CD8-positive, alpha-beta T cell (primary cell): ENCODE measurements at regions of chr12 and their contacts with region 1.

Region 1: DNA sequence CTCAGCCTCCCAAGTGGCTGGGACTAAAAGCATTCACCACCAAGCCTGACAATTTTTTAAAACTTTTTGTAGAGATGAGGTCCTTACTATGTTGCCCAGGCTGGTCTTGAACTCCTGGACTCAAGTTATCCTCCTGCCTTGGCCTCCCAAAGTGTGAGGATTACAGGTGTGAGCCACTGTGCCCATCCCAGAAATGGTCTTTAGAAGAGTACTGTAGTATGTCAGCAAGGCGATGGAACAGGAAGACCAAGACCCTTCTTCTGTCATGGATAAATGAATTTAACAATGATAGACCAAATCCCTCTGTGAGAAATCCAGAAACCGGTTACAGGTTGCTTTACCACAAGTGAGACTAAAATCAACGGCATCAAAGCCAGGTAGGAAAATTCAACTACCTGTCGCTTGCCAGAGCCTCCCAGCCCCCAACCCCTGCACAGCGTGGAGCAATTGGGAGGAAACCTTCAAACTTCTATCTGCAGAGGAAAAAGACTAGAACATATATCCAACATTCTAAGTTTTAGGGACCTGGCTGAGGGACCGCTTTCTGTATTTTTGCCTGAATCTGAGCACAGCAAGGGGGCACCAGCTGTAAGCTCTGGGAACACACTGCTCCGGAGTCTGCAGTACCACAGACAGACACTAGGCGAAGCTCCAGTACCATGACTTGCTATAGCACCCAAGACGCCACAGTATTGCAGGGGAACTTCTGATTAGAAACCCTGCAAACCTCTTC is 51.3 kb downstream of the CPSF6 start:
- DNase-seq: peak; percentile 64 to 89 (median 83)
- ATAC-seq: peak; percentile 100
- H3K4me3 ChIP-seq: no peak overlapping the region
- H3K4me3 Mint-ChIP-seq: no peak overlapping the region
- H3K27ac ChIP-seq: no peak overlapping the region
- H3K27ac Mint-ChIP-seq: no peak overlapping the region
- H3K4me1 ChIP-seq: no peaks in the 10 kb centered on the region
- H3K4me1 Mint-ChIP-seq: peaks cover 10% of the 10 kb centered on the region
- H3K27me3 ChIP-seq: peaks cover 0 to 9% of the 10 kb centered on the region in 2 experiments
- H3K27me3 Mint-ChIP-seq: peaks cover 24% of the 10 kb centered on the region
- CTCF ChIP-seq: peak; percentile 92

Region 2: GRCh38 chr12:69324797-69325466 is 34.2 kb after region 1 on chr12:
- CTCF ChIA-PET with region 1: interaction called, 5 read pairs
- POLR2A ChIA-PET with region 1: interaction called, 15 read pairs
- intact Hi-C with region 1: loop called in 1 of 2 experiments (anchors 5 kb)
- DNase-seq: peak in 1 of 9 experiments; percentile 13
- ATAC-seq: no peak
- H3K4me3 ChIP-seq: no peak overlapping the region
- H3K4me3 Mint-ChIP-seq: no peak overlapping the region
- H3K27ac ChIP-seq: no peak overlapping the region
- H3K27ac Mint-ChIP-seq: no peak overlapping the region
- H3K4me1 ChIP-seq: peaks cover 13% of the 10 kb centered on the region
- H3K4me1 Mint-ChIP-seq: peaks cover 24% of the 10 kb centered on the region
- H3K27me3 ChIP-seq: no peaks in the 10 kb centered on the region
- H3K27me3 Mint-ChIP-seq: peaks cover 3% of the 10 kb centered on the region
- CTCF ChIP-seq: no peak

Region 3: DNA sequence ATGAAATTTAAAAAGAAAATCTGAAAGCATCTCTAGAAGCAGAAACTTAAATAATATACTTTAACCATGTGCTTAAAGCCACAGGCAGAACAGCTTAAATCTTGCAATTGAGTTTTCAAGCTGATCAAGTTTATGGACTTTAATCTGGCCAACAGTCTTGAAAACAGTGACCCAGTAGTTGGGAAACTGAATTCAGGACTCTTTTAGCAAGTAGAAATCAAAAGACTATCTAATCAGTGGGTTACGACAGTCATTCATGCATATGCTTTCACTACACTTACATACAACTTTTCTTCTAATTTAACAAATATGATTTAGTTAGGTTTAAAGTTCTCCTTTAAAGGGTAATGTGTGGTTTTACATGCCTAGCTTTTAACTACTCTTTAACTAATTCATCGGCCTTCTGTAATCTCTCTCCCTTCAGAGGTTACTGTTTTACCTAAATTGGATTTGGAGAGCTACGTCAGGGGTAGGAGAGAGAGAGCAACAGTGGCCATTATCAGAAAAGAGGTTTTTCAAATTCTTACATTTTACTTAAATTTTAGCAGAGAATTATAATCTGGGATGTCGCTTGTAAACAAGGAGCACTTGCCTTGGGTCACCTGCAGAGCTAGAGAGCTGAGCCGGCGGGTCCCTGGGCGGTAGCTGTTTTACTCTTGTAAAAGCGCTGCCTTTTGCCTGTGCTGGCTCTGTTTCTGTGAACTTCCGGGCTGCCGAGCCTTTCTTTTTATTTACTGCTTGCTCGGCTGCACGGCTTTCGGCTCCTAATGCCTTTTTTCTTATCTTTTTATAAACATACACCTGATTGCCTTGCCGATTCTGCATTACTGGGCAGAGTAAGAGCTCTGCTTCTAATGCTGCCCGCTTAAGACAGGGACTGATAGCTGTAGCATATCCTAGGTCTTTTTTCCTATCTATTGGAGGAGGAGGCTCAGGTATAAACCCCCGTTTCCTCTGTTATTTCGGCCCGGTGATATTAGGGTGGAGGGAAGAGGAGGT is 40.1 kb after region 1 on chr12:
- CTCF ChIA-PET with region 1: interaction called, 8 read pairs
- POLR2A ChIA-PET with region 1: interaction called, 15 read pairs
- intact Hi-C with region 1: loop called (anchors 1 to 5 kb)
- DNase-seq: peak; percentile 48 to 85 (median 65)
- ATAC-seq: peak; percentile 67
- H3K4me3 ChIP-seq: peak overlapping the region; percentile 53 to 61
- H3K4me3 Mint-ChIP-seq: peak overlapping the region; percentile 93
- H3K27ac ChIP-seq: peak overlapping the region; percentile 80 to 86
- H3K27ac Mint-ChIP-seq: peak overlapping the region; percentile 99
- H3K4me1 ChIP-seq: peaks cover 51% of the 10 kb centered on the region
- H3K4me1 Mint-ChIP-seq: peaks cover 56% of the 10 kb centered on the region
- H3K27me3 ChIP-seq: no peaks in the 10 kb centered on the region
- H3K27me3 Mint-ChIP-seq: no peaks in the 10 kb centered on the region
- CTCF ChIP-seq: no peak

Region 4: GRCh38 chr12:69354556-69355187 is 64.0 kb after region 1 on chr12:
- CTCF ChIA-PET with region 1: interaction called, 23 read pairs
- POLR2A ChIA-PET with region 1: interaction called, 3 read pairs
- intact Hi-C with region 1: loop called (anchors 1 to 2 kb)
- DNase-seq: no peak
- ATAC-seq: no peak
- H3K4me3 ChIP-seq: no peak overlapping the region
- H3K4me3 Mint-ChIP-seq: no peak overlapping the region
- H3K27ac ChIP-seq: no peak overlapping the region
- H3K27ac Mint-ChIP-seq: no peak overlapping the region
- H3K4me1 ChIP-seq: peaks cover 9% of the 10 kb centered on the region
- H3K4me1 Mint-ChIP-seq: peaks cover 13% of the 10 kb centered on the region
- H3K27me3 ChIP-seq: no peaks in the 10 kb centered on the region
- H3K27me3 Mint-ChIP-seq: peaks cover 14% of the 10 kb centered on the region
- CTCF ChIP-seq: no peak

Region 5: GRCh38 chr12:69470189-69471075 is 179.7 kb after region 1 on chr12 and contains the start of gene FRS2:
- CTCF ChIA-PET with region 1: no interaction called
- POLR2A ChIA-PET with region 1: no interaction called
- intact Hi-C with region 1: loop called in 1 of 2 experiments (anchors 5 kb)
- DNase-seq: peak; percentile 66 to 91 (median 84)
- ATAC-seq: peak; percentile 97
- H3K4me3 ChIP-seq: peak within 1 kb of the TSS; percentile 86 to 88
- H3K4me3 Mint-ChIP-seq: peak within 1 kb of the TSS; percentile 98
- H3K27ac ChIP-seq: peak within 1 kb of the TSS; percentile 76 to 82
- H3K27ac Mint-ChIP-seq: peak within 1 kb of the TSS; percentile 97
- H3K4me1 ChIP-seq: peaks cover 30% of the 10 kb centered on the region
- H3K4me1 Mint-ChIP-seq: peaks cover 46% of the 10 kb centered on the region
- H3K27me3 ChIP-seq: no peaks in the 10 kb centered on the region
- H3K27me3 Mint-ChIP-seq: no peaks in the 10 kb centered on the region
- CTCF ChIP-seq: no peak
- total RNA-seq, gene FRS2: 31.1 to 32.4 TPM

Region 6: GRCh38 chr12:69570545-69571399 is 280.1 kb after region 1 on chr12:
- CTCF ChIA-PET with region 1: interaction called, 51 read pairs
- POLR2A ChIA-PET with region 1: interaction called, 10 read pairs
- intact Hi-C with region 1: loop called (anchors 1 kb)
- DNase-seq: peak in 8 of 9 experiments; percentile 5 to 86 (median 56)
- ATAC-seq: peak; percentile 83
- H3K4me3 ChIP-seq: no peak overlapping the region
- H3K4me3 Mint-ChIP-seq: no peak overlapping the region
- H3K27ac ChIP-seq: no peak overlapping the region
- H3K27ac Mint-ChIP-seq: no peak overlapping the region
- H3K4me1 ChIP-seq: no peaks in the 10 kb centered on the region
- H3K4me1 Mint-ChIP-seq: no peaks in the 10 kb centered on the region
- H3K27me3 ChIP-seq: no peaks in the 10 kb centered on the region
- H3K27me3 Mint-ChIP-seq: no peaks in the 10 kb centered on the region
- CTCF ChIP-seq: peak; percentile 94

Region 7: DNA sequence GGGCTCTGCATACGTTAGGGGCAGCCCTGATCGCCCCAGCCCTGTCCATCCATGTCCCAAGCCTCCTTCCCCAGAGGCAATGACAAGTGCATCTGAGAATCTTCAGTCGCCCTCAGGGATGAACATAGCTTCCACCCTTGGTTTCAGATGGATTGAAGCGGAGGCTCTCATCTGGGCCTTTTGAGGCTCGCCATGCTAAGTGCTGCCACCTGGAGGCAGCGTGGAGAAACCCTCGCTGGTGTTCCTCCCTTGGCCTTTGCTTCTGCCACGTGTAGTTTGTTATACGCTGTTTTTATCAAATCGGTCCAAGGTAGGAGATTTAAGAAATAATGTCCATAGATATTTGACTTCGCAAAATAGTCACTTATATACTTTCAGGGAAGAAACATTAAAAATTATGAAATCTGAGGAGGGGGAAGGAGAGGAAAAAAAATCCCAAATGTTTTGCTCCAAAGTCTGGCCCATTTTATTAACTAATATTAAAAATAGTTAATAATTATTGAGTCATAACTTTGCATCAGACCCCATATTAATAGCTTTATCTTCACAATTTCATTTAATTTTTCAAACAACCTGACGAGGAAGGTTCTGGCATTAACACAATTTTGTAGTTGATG is 348.8 kb after region 1 on chr12:
- CTCF ChIA-PET with region 1: interaction called, 17 read pairs
- POLR2A ChIA-PET with region 1: interaction called, 4 read pairs
- intact Hi-C with region 1: loop called (anchors 1 kb)
- DNase-seq: peak; percentile 15 to 71 (median 53)
- ATAC-seq: peak; percentile 73
- H3K4me3 ChIP-seq: no peak overlapping the region
- H3K4me3 Mint-ChIP-seq: no peak overlapping the region
- H3K27ac ChIP-seq: no peak overlapping the region
- H3K27ac Mint-ChIP-seq: no peak overlapping the region
- H3K4me1 ChIP-seq: no peaks in the 10 kb centered on the region
- H3K4me1 Mint-ChIP-seq: no peaks in the 10 kb centered on the region
- H3K27me3 ChIP-seq: no peaks in the 10 kb centered on the region
- H3K27me3 Mint-ChIP-seq: no peaks in the 10 kb centered on the region
- CTCF ChIP-seq: peak; percentile 81